Activated CD4-positive, alpha-beta T cell treated with anti-CD3 and anti-CD28 coated beads for 36 hours (primary cell): ENCODE measurements at regions of chr12 and their contacts with region 1.

Region 1: GRCh38 chr12:12032851-12033588 is 37.7 kb upstream of the BCL2L14 start:
- DNase-seq: peak; percentile 78
- ATAC-seq: peak; percentile 73
- H3K4me3 Mint-ChIP-seq: peak overlapping the region; percentile 60
- H3K27ac Mint-ChIP-seq: peak overlapping the region; percentile 91
- H3K4me1 Mint-ChIP-seq: peaks cover 46% of the 10 kb centered on the region
- H3K27me3 Mint-ChIP-seq: no peaks in the 10 kb centered on the region

Region 2: GRCh38 chr12:11553871-11554533 is 479.0 kb before region 1 on chr12:
- CTCF ChIA-PET with region 1: interaction called, 27 read pairs
- POLR2A ChIA-PET with region 1: no interaction called
- intact Hi-C with region 1: loop called in 1 of 2 experiments (anchors 1 kb)
- DNase-seq: peak; percentile 76
- ATAC-seq: peak; percentile 79
- H3K4me3 Mint-ChIP-seq: no peak overlapping the region
- H3K27ac Mint-ChIP-seq: no peak overlapping the region
- H3K4me1 Mint-ChIP-seq: peaks cover 28% of the 10 kb centered on the region
- H3K27me3 Mint-ChIP-seq: no peaks in the 10 kb centered on the region

Region 3: GRCh38 chr12:11724888-11725311 is 308.1 kb before region 1 on chr12:
- CTCF ChIA-PET with region 1: interaction called, 6 read pairs
- POLR2A ChIA-PET with region 1: no interaction called
- intact Hi-C with region 1: loop called in 1 of 2 experiments (anchors 5 kb)
- DNase-seq: no peak
- ATAC-seq: no peak
- H3K4me3 Mint-ChIP-seq: no peak overlapping the region
- H3K27ac Mint-ChIP-seq: no peak overlapping the region
- H3K4me1 Mint-ChIP-seq: peaks cover 60% of the 10 kb centered on the region
- H3K27me3 Mint-ChIP-seq: no peaks in the 10 kb centered on the region

Region 4: GRCh38 chr12:11780521-11781101 is 252.4 kb before region 1 on chr12:
- CTCF ChIA-PET with region 1: interaction called, 12 read pairs
- POLR2A ChIA-PET with region 1: interaction called, 4 read pairs
- intact Hi-C with region 1: no loop called
- DNase-seq: no peak
- ATAC-seq: peak; percentile 60
- H3K4me3 Mint-ChIP-seq: peak overlapping the region; percentile 2
- H3K27ac Mint-ChIP-seq: peak overlapping the region; percentile 68
- H3K4me1 Mint-ChIP-seq: peaks cover 82% of the 10 kb centered on the region
- H3K27me3 Mint-ChIP-seq: no peaks in the 10 kb centered on the region

Region 5: GRCh38 chr12:11836282-11837151 is 196.5 kb before region 1 on chr12:
- CTCF ChIA-PET with region 1: interaction called, 4 read pairs
- POLR2A ChIA-PET with region 1: no interaction called
- intact Hi-C with region 1: loop called (anchors 5 kb)
- DNase-seq: peak; percentile 88
- ATAC-seq: peak; percentile 86
- H3K4me3 Mint-ChIP-seq: peak overlapping the region; percentile 45
- H3K27ac Mint-ChIP-seq: peak overlapping the region; percentile 95
- H3K4me1 Mint-ChIP-seq: peaks cover 77% of the 10 kb centered on the region
- H3K27me3 Mint-ChIP-seq: no peaks in the 10 kb centered on the region

Region 6: GRCh38 chr12:11901701-11902524 is 131.1 kb before region 1 on chr12:
- CTCF ChIA-PET with region 1: interaction called, 6 read pairs
- POLR2A ChIA-PET with region 1: no interaction called
- intact Hi-C with region 1: loop called (anchors 5 kb)
- DNase-seq: peak; percentile 75
- ATAC-seq: peak; percentile 78
- H3K4me3 Mint-ChIP-seq: peak overlapping the region; percentile 39
- H3K27ac Mint-ChIP-seq: peak overlapping the region; percentile 88
- H3K4me1 Mint-ChIP-seq: peaks cover 44% of the 10 kb centered on the region
- H3K27me3 Mint-ChIP-seq: peaks cover 2% of the 10 kb centered on the region

Region 7: DNA sequence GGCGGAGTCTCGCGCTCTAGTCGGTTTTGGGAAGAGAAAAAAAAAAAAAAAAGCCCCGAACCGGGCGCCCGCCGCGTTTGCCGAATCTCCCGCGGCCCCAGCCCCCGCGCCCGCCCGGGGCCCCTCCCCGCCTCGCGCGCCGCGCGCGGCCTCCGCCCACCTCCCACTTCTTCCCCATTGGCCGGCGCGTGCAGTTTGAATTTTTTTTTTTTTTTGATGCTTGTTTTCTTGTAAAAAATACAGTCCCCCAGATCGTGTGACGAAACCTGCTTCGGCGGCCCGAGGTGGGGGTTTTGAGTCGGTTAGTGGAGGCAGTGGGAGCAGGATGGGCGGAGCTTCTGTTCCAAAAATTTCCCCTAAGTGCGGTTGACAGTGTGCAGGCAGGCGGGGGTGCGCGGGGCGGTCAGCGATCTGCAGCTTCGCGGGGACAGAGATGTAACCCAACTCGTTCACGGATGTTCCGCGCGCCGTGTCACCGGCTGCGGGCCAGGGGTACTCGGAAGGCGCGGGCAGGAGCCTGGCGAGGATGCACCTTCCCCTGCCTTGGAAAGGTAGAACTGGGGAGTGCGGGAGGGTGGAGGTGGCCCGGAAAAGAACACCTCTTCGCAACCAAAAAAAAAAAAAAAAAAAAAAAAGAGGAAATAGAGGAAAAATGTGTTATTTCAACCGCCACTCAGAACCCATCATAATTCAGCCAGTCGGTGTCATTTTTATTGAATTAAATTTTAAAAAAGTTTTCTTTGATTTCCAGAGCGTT is 692.7 kb after region 1 on chr12:
- CTCF ChIA-PET with region 1: no interaction called
- POLR2A ChIA-PET with region 1: no interaction called
- intact Hi-C with region 1: no loop called
- DNase-seq: peak; percentile 96
- ATAC-seq: peak; percentile 71
- H3K4me3 Mint-ChIP-seq: peak overlapping the region; percentile 93
- H3K27ac Mint-ChIP-seq: peak overlapping the region; percentile 96
- H3K4me1 Mint-ChIP-seq: peaks cover 42% of the 10 kb centered on the region
- H3K27me3 Mint-ChIP-seq: no peaks in the 10 kb centered on the region